ENCODE measurements at regions of chr21 and their contacts with region 1.

Region 1: GRCh38 chr21:44927587-44928461 is 7.1 kb upstream of the ITGB2 start:
- DNase-seq: peak; percentile 56 to 92
- ATAC-seq: peak; percentile 63 to 84 (median 72)
- H3K4me3 ChIP-seq: peak overlapping the region; percentile 47
- H3K4me3 Mint-ChIP-seq: peak overlapping the region; percentile 91
- H3K27ac ChIP-seq: peak overlapping the region; percentile 74
- H3K27ac Mint-ChIP-seq: peak overlapping the region; percentile 92 to 98
- H3K4me1 ChIP-seq: peaks cover 88% of the 10 kb centered on the region
- H3K4me1 Mint-ChIP-seq: peaks cover 79 to 86% of the 10 kb centered on the region in 2 donors
- H3K27me3 ChIP-seq: no peaks in the 10 kb centered on the region
- H3K27me3 Mint-ChIP-seq: no peaks in the 10 kb centered on the region
- CTCF ChIP-seq: no peak

Region 2: GRCh38 chr21:44370027-44370735 is 557.6 kb before region 1 on chr21:
- intact Hi-C with region 1: loop called (anchors 10 kb)
- DNase-seq: no peak
- ATAC-seq: peak in 1 of 3 donors; percentile 48
- H3K4me3 ChIP-seq: no peak overlapping the region
- H3K4me3 Mint-ChIP-seq: no peak overlapping the region
- H3K27ac ChIP-seq: no peak overlapping the region
- H3K27ac Mint-ChIP-seq: no peak overlapping the region
- H3K4me1 ChIP-seq: peaks cover 20% of the 10 kb centered on the region
- H3K4me1 Mint-ChIP-seq: peaks cover 30 to 40% of the 10 kb centered on the region in 2 donors
- H3K27me3 ChIP-seq: peaks cover 6% of the 10 kb centered on the region
- H3K27me3 Mint-ChIP-seq: peaks cover 0 to 3% of the 10 kb centered on the region in 2 donors
- CTCF ChIP-seq: no peak

Region 3: GRCh38 chr21:44510508-44511210 is 417.2 kb before region 1 on chr21:
- intact Hi-C with region 1: loop called (anchors 5 kb)
- DNase-seq: peak; percentile 78 to 90
- ATAC-seq: peak; percentile 68 to 92 (median 90)
- H3K4me3 ChIP-seq: no peak overlapping the region
- H3K4me3 Mint-ChIP-seq: no peak overlapping the region
- H3K27ac ChIP-seq: no peak overlapping the region
- H3K27ac Mint-ChIP-seq: no peak overlapping the region
- H3K4me1 ChIP-seq: peaks cover 14% of the 10 kb centered on the region
- H3K4me1 Mint-ChIP-seq: peaks cover 0 to 5% of the 10 kb centered on the region in 2 donors
- H3K27me3 ChIP-seq: no peaks in the 10 kb centered on the region
- H3K27me3 Mint-ChIP-seq: peaks cover 0 to 3% of the 10 kb centered on the region in 2 donors
- CTCF ChIP-seq: peak; percentile 88

Region 4: DNA sequence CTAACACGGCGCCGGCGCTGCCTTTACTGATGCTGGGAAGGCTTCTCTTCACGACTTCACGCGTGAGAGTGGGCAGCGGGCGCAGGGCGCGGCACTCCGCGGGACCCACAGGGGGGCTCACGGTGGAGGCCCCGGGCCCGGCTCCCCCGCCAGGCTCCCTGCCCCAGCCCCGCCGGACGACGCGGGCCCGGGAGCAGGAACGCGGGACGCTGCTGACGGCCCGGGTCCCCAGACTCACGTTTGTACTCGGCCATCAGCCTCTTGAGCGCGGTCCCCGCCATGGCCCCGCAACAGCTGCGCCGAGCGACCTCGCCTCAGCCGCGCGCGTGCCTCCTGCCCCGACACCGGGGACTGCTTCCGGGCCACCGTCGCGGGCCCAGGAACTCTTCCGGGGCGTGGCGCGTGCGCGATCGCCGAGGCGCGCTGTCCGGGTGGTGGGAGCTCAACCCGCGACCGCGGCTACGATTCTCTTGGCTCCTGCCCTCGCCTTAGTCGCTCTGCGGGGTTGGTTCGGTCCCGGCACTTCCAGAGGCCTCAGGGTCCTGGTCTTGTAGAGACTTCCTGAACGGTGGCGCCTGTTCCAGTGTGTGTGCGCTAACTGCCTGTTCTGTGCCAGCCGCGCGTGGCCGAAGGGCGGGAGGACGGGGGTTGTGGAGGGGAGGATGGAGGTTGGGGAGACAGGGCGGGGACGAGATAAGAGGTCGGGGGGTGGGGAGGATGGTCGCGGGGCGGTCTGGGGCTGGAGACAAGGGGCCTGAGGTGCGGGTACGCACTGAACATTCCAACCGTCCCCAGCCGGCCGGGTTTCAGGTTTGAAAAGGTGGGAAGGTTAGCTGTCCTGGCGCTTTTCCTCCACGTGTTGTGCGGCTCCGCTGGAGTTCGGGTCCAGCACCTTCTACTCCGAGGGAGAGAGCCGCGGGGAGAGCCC is 126.1 kb before region 1 on chr21 and contains the start of gene UBE2G2:
- intact Hi-C with region 1: loop called (anchors 1 kb)
- DNase-seq: peak; percentile 89 to 93
- ATAC-seq: peak; percentile 94 to 95 (median 94)
- H3K4me3 ChIP-seq: peak within 1 kb of the TSS; percentile 90
- H3K4me3 Mint-ChIP-seq: peak within 1 kb of the TSS; percentile 94
- H3K27ac ChIP-seq: peak within 1 kb of the TSS; percentile 64
- H3K27ac Mint-ChIP-seq: peak within 1 kb of the TSS; percentile 79 to 85
- H3K4me1 ChIP-seq: peaks cover 20% of the 10 kb centered on the region
- H3K4me1 Mint-ChIP-seq: peaks cover 35 to 41% of the 10 kb centered on the region in 2 donors
- H3K27me3 ChIP-seq: no peaks in the 10 kb centered on the region
- H3K27me3 Mint-ChIP-seq: no peaks in the 10 kb centered on the region
- CTCF ChIP-seq: no peak
- total RNA-seq, gene UBE2G2: 89.1 to 109 (median 107) TPM

Region 5: GRCh38 chr21:44892536-44893277 is 35.1 kb before region 1 on chr21:
- intact Hi-C with region 1: loop called (anchors 1 kb)
- DNase-seq: peak; percentile 77 to 89
- ATAC-seq: peak; percentile 79 to 92 (median 80)
- H3K4me3 ChIP-seq: no peak overlapping the region
- H3K4me3 Mint-ChIP-seq: no peak overlapping the region
- H3K27ac ChIP-seq: no peak overlapping the region
- H3K27ac Mint-ChIP-seq: peak overlapping the region; percentile 58 to 76
- H3K4me1 ChIP-seq: peaks cover 41% of the 10 kb centered on the region
- H3K4me1 Mint-ChIP-seq: peaks cover 17 to 22% of the 10 kb centered on the region in 2 donors
- H3K27me3 ChIP-seq: no peaks in the 10 kb centered on the region
- H3K27me3 Mint-ChIP-seq: no peaks in the 10 kb centered on the region
- CTCF ChIP-seq: peak; percentile 86

Region 6: GRCh38 chr21:44911389-44912157 is 16.3 kb before region 1 on chr21:
- intact Hi-C with region 1: loop called (anchors 2 kb)
- DNase-seq: peak; percentile 63 to 81
- ATAC-seq: peak; percentile 54 to 74 (median 62)
- H3K4me3 ChIP-seq: peak overlapping the region; percentile 26
- H3K4me3 Mint-ChIP-seq: peak overlapping the region; percentile 85
- H3K27ac ChIP-seq: peak overlapping the region; percentile 83
- H3K27ac Mint-ChIP-seq: peak overlapping the region; percentile 85 to 98
- H3K4me1 ChIP-seq: peaks cover 95% of the 10 kb centered on the region
- H3K4me1 Mint-ChIP-seq: peaks cover 63 to 78% of the 10 kb centered on the region in 2 donors
- H3K27me3 ChIP-seq: no peaks in the 10 kb centered on the region
- H3K27me3 Mint-ChIP-seq: no peaks in the 10 kb centered on the region
- CTCF ChIP-seq: peak; percentile 78

Region 7: DNA sequence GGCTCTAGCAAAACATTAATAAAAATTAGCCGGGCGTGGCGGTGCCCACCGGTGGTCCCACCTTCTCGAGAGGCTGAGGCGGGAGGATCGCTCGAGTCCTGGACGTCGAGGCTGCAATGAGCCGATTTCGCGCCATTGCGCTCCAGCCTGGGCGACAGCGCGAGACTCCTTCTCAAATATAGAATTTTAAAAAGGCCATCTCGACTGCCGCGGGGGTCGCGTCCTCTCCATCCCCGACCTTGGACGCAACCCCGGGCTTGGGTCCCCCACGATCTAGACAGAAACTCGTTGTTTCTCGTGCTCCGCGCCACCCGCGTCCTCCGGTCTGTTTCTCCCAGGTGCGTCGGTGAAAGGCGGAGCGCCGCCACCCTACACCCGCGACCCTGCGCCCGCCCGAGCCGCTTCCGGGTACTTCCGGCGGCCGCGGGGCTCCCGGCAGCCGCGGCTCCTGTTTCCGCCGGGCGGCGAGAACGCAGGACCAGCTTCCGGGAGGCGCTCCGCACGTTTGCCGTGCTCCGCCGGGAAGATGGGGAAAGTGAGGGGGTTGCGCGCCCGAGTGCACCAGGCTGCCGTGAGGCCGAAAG is 11.8 kb after region 1 on chr21 and contains the start of gene SLX9:
- intact Hi-C with region 1: no loop called
- DNase-seq: peak; percentile 71 to 89
- ATAC-seq: peak; percentile 90 to 96 (median 93)
- H3K4me3 ChIP-seq: peak within 1 kb of the TSS; percentile 78
- H3K4me3 Mint-ChIP-seq: peak within 1 kb of the TSS; percentile 93
- H3K27ac ChIP-seq: peak within 1 kb of the TSS; percentile 20
- H3K27ac Mint-ChIP-seq: peak within 1 kb of the TSS; percentile 61 to 66
- H3K4me1 ChIP-seq: peaks cover 32% of the 10 kb centered on the region
- H3K4me1 Mint-ChIP-seq: peaks cover 21 to 33% of the 10 kb centered on the region in 2 donors
- H3K27me3 ChIP-seq: no peaks in the 10 kb centered on the region
- H3K27me3 Mint-ChIP-seq: no peaks in the 10 kb centered on the region
- CTCF ChIP-seq: no peak
- total RNA-seq, gene SLX9: 12.8 to 22.9 (median 20.0) TPM

Region 8: DNA sequence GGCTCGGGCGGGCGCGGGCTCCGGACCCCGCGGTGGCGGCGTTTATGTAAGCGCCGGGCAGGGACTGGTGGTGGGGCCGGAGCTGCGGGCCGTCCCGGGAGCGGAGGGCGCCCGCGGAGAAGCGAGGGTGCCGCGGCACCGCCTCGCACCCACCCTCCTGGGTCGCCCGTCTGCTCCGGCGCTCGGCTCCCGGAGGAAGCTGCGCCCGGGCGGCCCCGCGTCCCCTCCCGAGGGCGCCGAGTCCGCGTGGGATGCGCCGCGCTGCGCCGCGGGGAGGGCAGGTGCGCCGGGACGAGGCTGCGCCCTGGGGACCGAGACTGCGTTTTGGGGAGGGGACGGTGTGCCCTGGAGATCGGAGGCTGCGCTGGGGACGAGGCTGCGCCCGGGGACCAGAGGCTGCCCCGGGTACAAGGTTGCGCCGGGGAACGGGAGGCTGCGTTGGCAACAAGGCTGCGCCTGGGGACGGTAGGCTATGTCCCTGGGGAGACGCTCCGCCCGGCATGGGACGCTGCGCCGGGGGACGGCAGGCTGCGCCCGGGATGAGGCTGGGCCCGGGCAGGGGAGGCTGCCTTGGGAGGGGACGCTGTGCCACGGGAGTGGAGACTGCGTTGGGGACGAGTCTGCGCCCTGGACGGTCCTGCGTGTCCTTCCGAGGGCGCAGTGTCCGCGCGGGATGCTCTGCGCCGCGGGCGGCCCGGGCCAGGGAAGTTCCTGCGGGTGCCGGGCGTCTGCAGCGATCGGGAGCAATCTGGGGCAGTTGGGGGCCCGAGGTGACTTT is 147.2 kb after region 1 on chr21:
- intact Hi-C with region 1: loop called (anchors 5 kb)
- DNase-seq: peak in 1 of 2 donors; percentile 51
- ATAC-seq: no peak
- H3K4me3 ChIP-seq: peak overlapping the region; percentile 49
- H3K4me3 Mint-ChIP-seq: peak overlapping the region; percentile 84
- H3K27ac ChIP-seq: no peak overlapping the region
- H3K27ac Mint-ChIP-seq: peak overlapping the region in 1 of 2 donors; percentile 45
- H3K4me1 ChIP-seq: peaks cover 47% of the 10 kb centered on the region
- H3K4me1 Mint-ChIP-seq: peaks cover 42 to 51% of the 10 kb centered on the region in 2 donors
- H3K27me3 ChIP-seq: no peaks in the 10 kb centered on the region
- H3K27me3 Mint-ChIP-seq: peaks cover 5 to 6% of the 10 kb centered on the region in 2 donors
- CTCF ChIP-seq: no peak